ENCODE measurements at regions of chr15 and their contacts with region 1.

Region 1: DNA sequence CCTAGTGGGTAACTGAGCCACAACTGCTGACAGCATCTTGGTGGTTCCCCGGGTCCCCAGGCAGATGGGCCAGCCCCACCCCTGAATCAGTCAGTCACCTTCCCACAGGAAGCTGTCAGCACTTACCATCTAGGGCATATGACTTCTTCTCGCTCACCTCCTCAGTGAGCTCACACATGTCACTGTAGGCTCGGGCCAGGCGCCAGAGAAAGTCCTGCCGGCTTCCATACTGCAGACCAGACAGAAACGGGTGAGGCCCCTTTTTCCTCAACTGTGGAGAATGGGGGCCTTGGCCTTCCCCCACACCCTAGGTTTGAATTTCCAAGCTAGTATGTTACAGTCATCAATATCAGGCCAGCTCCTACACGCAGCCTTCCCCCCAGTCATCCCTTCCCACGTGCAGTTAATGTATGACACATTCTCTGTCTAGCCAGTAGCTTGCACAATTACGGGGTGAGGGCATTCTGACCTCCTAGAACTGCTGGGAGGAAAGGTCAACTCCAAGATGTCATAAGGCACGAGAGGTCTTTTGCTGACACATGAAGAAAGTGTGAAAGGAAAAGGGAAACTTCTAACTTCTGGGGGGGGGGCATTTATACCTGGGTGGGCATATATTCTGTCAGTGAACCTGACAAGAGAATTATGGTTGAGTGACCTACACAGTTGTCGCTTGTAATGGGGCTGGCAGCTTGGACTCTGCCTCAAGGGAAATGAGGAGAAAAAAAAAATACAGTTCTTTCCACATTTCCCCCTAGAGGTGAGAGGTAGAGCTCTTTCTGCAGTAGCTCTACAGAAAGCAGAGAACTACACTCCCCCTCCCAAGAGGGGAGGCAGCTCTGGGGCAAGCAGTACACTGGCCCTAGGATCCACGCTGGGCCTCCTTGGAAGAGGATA is 10.9 kb downstream of the RMDN3 start:
- H3K4me3 Mint-ChIP-seq: no peak overlapping the region
- H3K27ac Mint-ChIP-seq: no peak overlapping the region
- H3K4me1 Mint-ChIP-seq: peaks cover 23% of the 10 kb centered on the region
- H3K27me3 Mint-ChIP-seq: no peaks in the 10 kb centered on the region

Region 2: GRCh38 chr15:40506964-40507571 is 237.1 kb before region 1 on chr15:
- intact Hi-C with region 1: no loop called
- H3K4me3 Mint-ChIP-seq: peak overlapping the region; percentile 54
- H3K27ac Mint-ChIP-seq: no peak overlapping the region
- H3K4me1 Mint-ChIP-seq: peaks cover 25% of the 10 kb centered on the region
- H3K27me3 Mint-ChIP-seq: peaks cover 68% of the 10 kb centered on the region

Region 3: GRCh38 chr15:40543631-40544294 is 200.4 kb before region 1 on chr15:
- intact Hi-C with region 1: no loop called
- H3K4me3 Mint-ChIP-seq: no peak overlapping the region
- H3K27ac Mint-ChIP-seq: no peak overlapping the region
- H3K4me1 Mint-ChIP-seq: peaks cover 14% of the 10 kb centered on the region
- H3K27me3 Mint-ChIP-seq: no peaks in the 10 kb centered on the region

Region 4: DNA sequence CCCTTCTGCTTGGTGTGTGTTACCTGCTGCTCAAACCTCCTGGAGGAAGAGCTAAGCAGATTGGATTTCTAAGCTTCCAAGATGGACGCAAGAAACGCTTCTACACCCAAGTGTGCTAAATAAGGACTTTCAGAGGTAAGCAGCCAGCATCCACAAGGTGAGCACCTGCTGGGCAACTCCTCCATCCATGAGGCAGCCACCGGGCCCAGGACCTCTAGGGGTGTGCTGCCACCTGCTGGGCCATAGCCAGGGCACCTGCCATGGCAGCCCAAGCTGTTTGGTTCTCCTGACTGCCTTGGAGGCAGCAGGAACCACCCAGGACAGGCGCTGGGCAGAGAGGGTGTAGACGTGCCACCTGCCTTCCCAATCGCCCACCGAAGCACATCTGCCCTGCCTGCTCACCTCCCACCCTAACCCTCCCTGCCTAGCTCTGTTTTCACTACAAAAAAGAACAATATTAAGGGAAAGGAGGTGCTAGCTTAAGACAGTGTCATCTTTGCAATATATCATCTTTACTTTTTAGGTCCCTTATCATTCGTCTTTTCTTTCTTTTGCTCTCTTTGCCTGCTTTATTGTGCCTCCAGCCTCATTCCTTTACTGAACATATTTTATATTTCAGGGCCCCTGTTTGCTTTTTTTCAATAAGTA is 38.5 kb after region 1 on chr15:
- intact Hi-C with region 1: loop called (anchors 1 kb)
- H3K4me3 Mint-ChIP-seq: no peak overlapping the region
- H3K27ac Mint-ChIP-seq: no peak overlapping the region
- H3K4me1 Mint-ChIP-seq: peaks cover 9% of the 10 kb centered on the region
- H3K27me3 Mint-ChIP-seq: no peaks in the 10 kb centered on the region

Region 5: DNA sequence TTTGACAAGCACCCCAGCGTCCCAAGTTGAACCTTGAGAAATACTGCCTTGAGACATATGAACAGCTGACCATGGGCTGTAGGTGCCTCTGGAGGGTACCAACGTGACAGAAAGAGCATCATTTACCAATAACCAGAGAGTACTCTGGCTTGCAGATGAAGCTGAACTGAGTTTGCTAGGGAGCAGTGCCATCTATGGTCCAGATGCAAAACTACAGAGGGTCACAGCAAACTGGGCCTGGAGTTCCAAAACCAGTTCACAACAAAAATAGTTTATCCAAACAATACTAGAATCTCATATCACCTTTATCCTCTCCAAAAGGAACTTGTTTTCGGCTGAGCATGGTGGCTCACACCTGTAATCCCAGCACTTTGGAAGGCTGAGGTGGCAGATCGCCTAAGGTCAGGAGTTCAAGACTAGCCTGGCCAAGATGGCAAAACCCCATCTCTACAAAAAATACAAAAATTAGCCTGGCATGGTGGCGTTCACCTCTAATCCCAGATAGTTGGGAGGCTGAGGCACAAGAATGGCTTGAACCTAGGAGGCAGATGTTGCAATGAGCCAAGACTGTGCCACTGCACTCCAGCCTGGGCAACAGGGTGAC is 278.4 kb after region 1 on chr15:
- intact Hi-C with region 1: loop called (anchors 10 kb)
- H3K4me3 Mint-ChIP-seq: no peak overlapping the region
- H3K27ac Mint-ChIP-seq: no peak overlapping the region
- H3K4me1 Mint-ChIP-seq: peaks cover 19% of the 10 kb centered on the region
- H3K27me3 Mint-ChIP-seq: no peaks in the 10 kb centered on the region